Colonic mucosa (tissue), 4 donors: ENCODE measurements at regions of chr3 and their contacts with region 1.

Region 1: DNA sequence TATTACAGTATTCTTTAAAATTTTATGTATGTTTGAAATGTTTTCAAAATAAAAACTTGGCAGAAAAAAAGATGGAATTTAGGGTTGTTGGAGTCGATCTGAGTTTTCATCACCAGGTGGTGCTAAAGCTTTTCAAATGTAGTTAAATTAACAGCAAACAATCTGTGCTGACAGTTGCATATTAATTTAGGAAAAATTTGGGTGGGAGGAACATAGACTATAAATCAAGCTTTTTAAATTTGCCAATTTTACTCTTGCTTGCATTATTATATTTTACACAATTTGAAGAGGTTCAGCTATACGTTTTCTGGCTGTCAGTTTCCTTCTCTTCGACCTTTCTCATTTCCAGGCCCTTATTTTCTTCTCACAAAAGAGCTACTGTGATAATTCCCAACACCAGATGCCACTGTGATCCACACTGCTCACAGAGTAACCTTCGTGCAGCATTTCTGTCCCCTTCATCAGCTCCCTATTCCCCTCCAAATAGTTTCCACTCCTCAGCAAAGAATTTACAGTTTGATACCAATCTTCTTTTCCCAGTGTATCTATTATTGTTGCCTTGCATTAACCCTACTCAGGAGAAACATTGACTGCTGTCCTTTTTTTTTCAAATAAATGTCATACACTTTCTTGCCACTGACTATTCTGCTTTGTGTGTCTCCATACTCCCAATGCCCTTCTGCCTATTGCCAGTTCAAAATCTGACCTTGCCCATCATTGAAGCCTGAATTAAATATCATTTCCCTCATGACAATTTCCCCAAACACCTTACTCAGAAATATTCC is 53.4 kb upstream of the EIF5A2 start:
- DNase-seq: peak; percentile 27
- H3K4me3 ChIP-seq: no peak overlapping the region
- H3K27ac ChIP-seq: no peak overlapping the region
- H3K4me1 ChIP-seq: no peaks in the 10 kb centered on the region
- H3K27me3 ChIP-seq: no peaks in the 10 kb centered on the region
- CTCF ChIP-seq: peak; percentile 41

Region 2: GRCh38 chr3:171187706-171188290 is 226.0 kb after region 1 on chr3:
- intact Hi-C with region 1: loop called (anchors 5 kb)
- DNase-seq: peak; percentile 27
- H3K4me3 ChIP-seq: no peak overlapping the region
- H3K27ac ChIP-seq: no peak overlapping the region
- H3K4me1 ChIP-seq: no peaks in the 10 kb centered on the region
- H3K27me3 ChIP-seq: no peaks in the 10 kb centered on the region
- CTCF ChIP-seq: peak; percentile 42

Region 3: GRCh38 chr3:171407759-171408158 is 446.0 kb after region 1 on chr3:
- intact Hi-C with region 1: no loop called
- DNase-seq: no peak
- H3K4me3 ChIP-seq: no peak overlapping the region
- H3K27ac ChIP-seq: no peak overlapping the region
- H3K4me1 ChIP-seq: no peaks in the 10 kb centered on the region
- H3K27me3 ChIP-seq: no peaks in the 10 kb centered on the region
- CTCF ChIP-seq: no peak